Calu3 (cell line): ENCODE measurements at regions of chr2 and their contacts with region 1.

Region 1: GRCh38 chr2:108988796-108989713 is at the start of gene EDAR:
- DNase-seq: peak; percentile 74
- H3K4me3 Mint-ChIP-seq: peak within 1 kb of the TSS; percentile 43
- H3K27ac Mint-ChIP-seq: no peak within 1 kb of the TSS
- H3K4me1 Mint-ChIP-seq: no peaks in the 10 kb centered on the region
- H3K27me3 Mint-ChIP-seq: peaks cover 80% of the 10 kb centered on the region
- CTCF ChIP-seq: peak; percentile 43
- total RNA-seq, gene EDAR: not detected in 2 replicates

Region 2: DNA sequence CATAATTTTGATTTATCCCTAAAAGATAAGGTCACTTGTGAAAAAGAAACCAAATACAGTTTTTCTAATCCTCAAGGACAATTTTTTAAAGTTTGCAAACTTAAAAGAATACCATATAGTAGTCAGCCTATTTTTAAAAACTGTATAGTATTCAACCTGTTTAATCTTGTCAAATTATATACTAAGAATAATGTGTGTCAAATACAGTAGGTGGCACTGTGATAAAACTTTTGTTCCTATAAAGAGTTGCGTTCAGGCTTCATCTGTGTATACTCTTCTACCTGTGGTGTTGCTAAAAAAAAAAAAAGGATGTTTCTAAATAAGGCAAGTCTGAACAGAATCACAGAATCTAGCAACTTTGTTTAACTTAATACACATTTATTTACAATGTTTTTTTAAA is 133.9 kb before region 1 on chr2:
- CTCF ChIA-PET with region 1: interaction called, 3 read pairs
- intact Hi-C with region 1: loop called (anchors 2 kb)
- DNase-seq: no peak
- H3K4me3 Mint-ChIP-seq: no peak overlapping the region
- H3K27ac Mint-ChIP-seq: no peak overlapping the region
- H3K4me1 Mint-ChIP-seq: no peaks in the 10 kb centered on the region
- H3K27me3 Mint-ChIP-seq: no peaks in the 10 kb centered on the region
- CTCF ChIP-seq: no peak

Region 3: DNA sequence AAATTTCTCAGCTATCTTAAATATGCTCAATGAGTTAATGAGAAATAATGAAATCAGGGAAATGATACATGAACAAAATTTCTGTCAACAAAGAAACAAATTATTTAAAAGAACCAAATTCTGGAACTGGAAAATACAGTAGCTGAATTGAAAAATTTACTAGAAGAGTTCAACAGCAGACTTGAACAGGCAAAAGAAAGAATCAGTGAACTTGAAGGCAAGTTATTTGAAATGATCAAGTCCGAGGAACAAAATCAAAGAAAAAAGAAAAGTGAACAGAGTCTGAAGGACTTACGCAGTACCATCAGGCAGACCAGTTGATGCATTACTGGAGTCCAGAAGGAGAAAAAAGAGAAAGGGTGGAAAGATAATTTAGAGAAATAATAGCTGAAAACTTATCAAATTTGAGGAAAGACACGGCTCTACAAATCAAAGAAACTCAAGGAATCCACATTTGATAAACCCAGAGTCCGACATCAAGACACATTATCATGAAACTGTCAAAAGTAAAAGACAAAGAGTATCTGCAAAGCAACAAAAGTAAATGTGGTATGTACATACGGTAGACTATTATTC is 118.9 kb before region 1 on chr2:
- CTCF ChIA-PET with region 1: no interaction called
- intact Hi-C with region 1: loop called (anchors 5 kb)
- DNase-seq: no peak
- H3K4me3 Mint-ChIP-seq: no peak overlapping the region
- H3K27ac Mint-ChIP-seq: no peak overlapping the region
- H3K4me1 Mint-ChIP-seq: peaks cover 20% of the 10 kb centered on the region
- H3K27me3 Mint-ChIP-seq: no peaks in the 10 kb centered on the region
- CTCF ChIP-seq: no peak

Region 4: GRCh38 chr2:108927936-108928659 is 61.0 kb before region 1 on chr2:
- CTCF ChIA-PET with region 1: interaction called, 4 read pairs
- intact Hi-C with region 1: loop called (anchors 1 kb)
- DNase-seq: peak; percentile 62
- H3K4me3 Mint-ChIP-seq: no peak overlapping the region
- H3K27ac Mint-ChIP-seq: no peak overlapping the region
- H3K4me1 Mint-ChIP-seq: no peaks in the 10 kb centered on the region
- H3K27me3 Mint-ChIP-seq: peaks cover 75% of the 10 kb centered on the region
- CTCF ChIP-seq: peak; percentile 73

Region 5: DNA sequence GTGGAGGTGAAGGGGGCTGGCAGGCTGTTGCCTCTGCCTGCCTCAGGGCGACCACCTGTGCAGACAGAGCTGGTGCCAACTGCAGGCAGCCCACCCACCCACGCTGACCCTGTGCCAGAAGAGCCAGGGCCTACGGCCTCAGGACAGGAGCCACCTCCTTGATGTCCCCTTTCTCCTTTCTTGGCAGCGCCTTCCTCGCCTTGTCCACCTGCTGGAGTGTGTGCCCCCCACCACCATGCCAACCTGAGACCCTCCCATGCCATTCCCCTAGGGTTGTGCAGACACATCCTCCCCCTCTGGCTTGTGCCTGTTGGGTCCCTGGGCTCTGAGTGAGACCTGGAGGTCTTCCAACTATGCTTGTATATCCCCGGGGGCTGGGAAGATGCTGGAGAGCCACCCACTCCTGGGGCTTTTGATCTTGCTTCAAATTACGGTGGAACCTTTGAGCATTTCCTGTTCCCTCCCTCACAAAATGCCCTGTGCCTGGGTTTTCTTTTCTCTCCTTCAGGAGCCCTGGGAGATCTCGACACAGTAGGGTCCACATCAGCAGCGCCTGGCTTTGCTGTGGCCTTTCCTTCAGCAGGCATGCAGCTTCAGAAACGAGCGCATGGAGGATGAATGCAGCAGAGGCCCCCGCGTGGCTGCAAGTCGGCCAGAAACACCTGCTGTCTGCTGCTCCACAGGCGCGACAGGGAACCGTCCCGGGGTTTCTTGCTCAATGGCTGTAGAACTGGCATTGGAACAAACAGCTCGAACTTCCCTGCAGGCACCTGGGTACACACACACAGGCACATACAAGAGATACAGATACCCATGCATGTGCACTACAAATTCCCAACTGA is 74.0 kb after region 1 on chr2:
- CTCF ChIA-PET with region 1: no interaction called
- intact Hi-C with region 1: no loop called
- DNase-seq: no peak
- H3K4me3 Mint-ChIP-seq: no peak overlapping the region
- H3K27ac Mint-ChIP-seq: no peak overlapping the region
- H3K4me1 Mint-ChIP-seq: no peaks in the 10 kb centered on the region
- H3K27me3 Mint-ChIP-seq: peaks cover 98% of the 10 kb centered on the region
- CTCF ChIP-seq: no peak